Endothelial cell of umbilical vein (primary cell): ENCODE measurements at regions of chr11 and their contacts with region 1.

Region 1: GRCh38 chr11:2459796-2460531 is 15.2 kb downstream of the KCNQ1 start:
- DNase-seq: no peak
- H3K4me3 ChIP-seq: no peak overlapping the region
- H3K27ac ChIP-seq: no peak overlapping the region
- H3K4me1 ChIP-seq: no peaks in the 10 kb centered on the region
- H3K27me3 ChIP-seq: no peaks in the 10 kb centered on the region
- CTCF ChIP-seq: no peak
- POLR2A ChIP-seq: no peak

Region 2: GRCh38 chr11:2436521-2437031 is 23.4 kb before region 1 on chr11:
- CTCF ChIA-PET with region 1: no interaction called
- POLR2A ChIA-PET with region 1: no interaction called
- dilution Hi-C with region 1: no loop called
- intact Hi-C with region 1: loop called (anchors 1 kb)
- DNase-seq: no peak
- H3K4me3 ChIP-seq: no peak overlapping the region
- H3K27ac ChIP-seq: no peak overlapping the region
- H3K4me1 ChIP-seq: no peaks in the 10 kb centered on the region
- H3K27me3 ChIP-seq: no peaks in the 10 kb centered on the region
- CTCF ChIP-seq: no peak
- POLR2A ChIP-seq: no peak

Region 3: GRCh38 chr11:2474061-2474901 is 14.3 kb after region 1 on chr11:
- CTCF ChIA-PET with region 1: no interaction called
- POLR2A ChIA-PET with region 1: no interaction called
- dilution Hi-C with region 1: no loop called
- intact Hi-C with region 1: no loop called
- DNase-seq: no peak
- H3K4me3 ChIP-seq: no peak overlapping the region
- H3K27ac ChIP-seq: no peak overlapping the region
- H3K4me1 ChIP-seq: no peaks in the 10 kb centered on the region
- H3K27me3 ChIP-seq: no peaks in the 10 kb centered on the region
- CTCF ChIP-seq: no peak
- POLR2A ChIP-seq: no peak

Region 4: GRCh38 chr11:2498750-2499149 is 38.8 kb after region 1 on chr11:
- CTCF ChIA-PET with region 1: no interaction called
- POLR2A ChIA-PET with region 1: no interaction called
- dilution Hi-C with region 1: no loop called
- intact Hi-C with region 1: no loop called
- DNase-seq: no peak
- H3K4me3 ChIP-seq: no peak overlapping the region
- H3K27ac ChIP-seq: no peak overlapping the region
- H3K4me1 ChIP-seq: no peaks in the 10 kb centered on the region
- H3K27me3 ChIP-seq: no peaks in the 10 kb centered on the region
- CTCF ChIP-seq: no peak
- POLR2A ChIP-seq: no peak

Region 5: DNA sequence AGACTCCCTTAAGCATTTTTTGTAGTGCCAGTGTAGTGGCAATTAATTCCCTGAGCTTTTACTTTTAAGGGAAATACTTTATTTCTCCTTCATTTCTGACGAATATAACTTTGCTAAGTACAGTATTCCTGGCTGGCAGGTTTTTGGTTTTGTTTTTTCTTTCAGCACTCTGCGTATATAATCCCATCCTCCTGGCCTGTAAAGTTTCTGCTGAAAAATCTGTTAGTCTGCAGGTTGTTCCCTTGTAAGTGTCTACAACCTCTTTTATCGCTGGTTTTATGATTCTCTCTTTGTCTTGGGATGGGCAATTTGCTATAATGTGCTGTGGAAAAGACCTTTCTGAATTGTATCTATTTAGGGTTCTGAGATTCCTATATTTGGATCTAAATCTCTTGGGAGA is 183.8 kb after region 1 on chr11:
- CTCF ChIA-PET with region 1: no interaction called
- POLR2A ChIA-PET with region 1: no interaction called
- dilution Hi-C with region 1: no loop called
- intact Hi-C with region 1: no loop called
- DNase-seq: no peak
- H3K4me3 ChIP-seq: no peak overlapping the region
- H3K27ac ChIP-seq: no peak overlapping the region
- H3K4me1 ChIP-seq: no peaks in the 10 kb centered on the region
- H3K27me3 ChIP-seq: no peaks in the 10 kb centered on the region
- CTCF ChIP-seq: no peak
- POLR2A ChIP-seq: no peak